ENCODE measurements at regions of chr12 and their contacts with region 1.

Region 1: GRCh38 chr12:41277116-41277945 is 89.2 kb downstream of the PDZRN4 start:
- DNase-seq: peak in 1 of 5 donors; percentile 10
- ATAC-seq: no peak
- H3K4me3 ChIP-seq: no peak overlapping the region
- H3K27ac ChIP-seq: no peak overlapping the region
- H3K4me1 ChIP-seq: peaks cover 0 to 14% (median 0%) of the 10 kb centered on the region in 12 donors
- H3K27me3 ChIP-seq: no peaks in the 10 kb centered on the region
- CTCF ChIP-seq: peak; percentile 40 to 74 (median 64)
- POLR2A ChIP-seq: no peak

Region 2: GRCh38 chr12:41663598-41664258 is 386.4 kb after region 1 on chr12:
- intact Hi-C with region 1: loop called in 7 of 10 experiments (anchors 5 to 10 kb)
- DNase-seq: no peak
- ATAC-seq: no peak
- H3K4me3 ChIP-seq: no peak overlapping the region
- H3K27ac ChIP-seq: no peak overlapping the region
- H3K4me1 ChIP-seq: peaks cover 0 to 7% (median 0%) of the 10 kb centered on the region in 12 donors
- H3K27me3 ChIP-seq: no peaks in the 10 kb centered on the region
- CTCF ChIP-seq: peak in 10 of 12 donors; percentile 16 to 54 (median 36)
- POLR2A ChIP-seq: no peak

Region 3: DNA sequence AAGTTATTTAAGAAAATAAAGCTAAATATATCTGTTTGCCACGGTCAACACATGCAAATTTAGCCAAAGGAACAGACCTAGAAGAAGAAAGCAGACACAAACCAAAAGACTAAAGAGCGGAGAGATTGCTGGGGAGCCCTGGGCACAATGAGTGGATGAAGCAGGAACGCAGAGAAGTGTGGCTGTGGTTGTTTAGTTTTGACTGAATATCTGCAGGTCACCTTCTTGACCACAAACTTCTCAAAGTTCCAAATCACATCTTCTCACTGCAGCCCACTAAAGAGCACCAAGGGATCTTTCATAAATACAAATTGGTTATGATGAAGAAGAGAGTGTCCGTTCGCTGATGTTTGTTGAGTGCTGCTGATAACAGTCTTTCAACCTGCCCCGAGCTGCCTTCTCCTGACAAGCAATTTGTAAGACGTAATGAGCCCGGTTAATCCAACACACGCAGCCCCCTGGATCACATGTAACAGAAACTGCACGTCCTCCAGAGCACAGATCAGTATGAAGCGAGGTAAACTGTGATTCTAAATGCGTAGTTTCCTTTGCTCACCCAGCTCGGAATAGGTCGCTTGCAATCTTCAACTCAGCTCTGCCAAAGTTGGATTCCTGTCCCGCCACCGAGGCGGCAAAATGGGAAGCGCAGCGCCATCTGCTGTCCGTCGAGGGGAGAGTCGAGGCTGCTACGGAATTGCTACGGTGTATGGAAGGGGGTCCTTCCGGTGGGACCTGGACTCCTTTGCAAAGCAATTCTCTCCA is 746.6 kb after region 1 on chr12:
- intact Hi-C with region 1: loop called (anchors 1 to 5 kb)
- DNase-seq: peak; percentile 71 to 88 (median 74)
- ATAC-seq: peak; percentile 57 to 93 (median 91)
- H3K4me3 ChIP-seq: peak overlapping the region in 10 of 12 donors; percentile 17 to 57 (median 44)
- H3K27ac ChIP-seq: no peak overlapping the region
- H3K4me1 ChIP-seq: peaks cover 0 to 14% (median 0%) of the 10 kb centered on the region in 12 donors
- H3K27me3 ChIP-seq: no peaks in the 10 kb centered on the region
- CTCF ChIP-seq: peak; percentile 90 to 98 (median 96)
- POLR2A ChIP-seq: no peak

Region 4: GRCh38 chr12:42104087-42104486 is 826.8 kb after region 1 on chr12:
- intact Hi-C with region 1: loop called in 2 of 10 experiments (anchors 10 kb)
- DNase-seq: no peak
- ATAC-seq: no peak
- H3K4me3 ChIP-seq: no peak overlapping the region
- H3K27ac ChIP-seq: no peak overlapping the region
- H3K4me1 ChIP-seq: no peaks in the 10 kb centered on the region
- H3K27me3 ChIP-seq: no peaks in the 10 kb centered on the region
- CTCF ChIP-seq: peak in 5 of 12 donors; percentile 10 to 40 (median 31)
- POLR2A ChIP-seq: no peak

Region 5: GRCh38 chr12:42332301-42333285 is 1055.3 kb after region 1 on chr12:
- intact Hi-C with region 1: loop called in 1 of 10 experiments (anchors 10 kb)
- DNase-seq: no peak
- ATAC-seq: peak in 3 of 4 donors; percentile 39 to 67 (median 44)
- H3K4me3 ChIP-seq: no peak overlapping the region
- H3K27ac ChIP-seq: no peak overlapping the region
- H3K4me1 ChIP-seq: peaks cover 0 to 28% (median 9%) of the 10 kb centered on the region in 12 donors
- H3K27me3 ChIP-seq: no peaks in the 10 kb centered on the region
- CTCF ChIP-seq: peak; percentile 56 to 81 (median 66)
- POLR2A ChIP-seq: no peak

Region 6: DNA sequence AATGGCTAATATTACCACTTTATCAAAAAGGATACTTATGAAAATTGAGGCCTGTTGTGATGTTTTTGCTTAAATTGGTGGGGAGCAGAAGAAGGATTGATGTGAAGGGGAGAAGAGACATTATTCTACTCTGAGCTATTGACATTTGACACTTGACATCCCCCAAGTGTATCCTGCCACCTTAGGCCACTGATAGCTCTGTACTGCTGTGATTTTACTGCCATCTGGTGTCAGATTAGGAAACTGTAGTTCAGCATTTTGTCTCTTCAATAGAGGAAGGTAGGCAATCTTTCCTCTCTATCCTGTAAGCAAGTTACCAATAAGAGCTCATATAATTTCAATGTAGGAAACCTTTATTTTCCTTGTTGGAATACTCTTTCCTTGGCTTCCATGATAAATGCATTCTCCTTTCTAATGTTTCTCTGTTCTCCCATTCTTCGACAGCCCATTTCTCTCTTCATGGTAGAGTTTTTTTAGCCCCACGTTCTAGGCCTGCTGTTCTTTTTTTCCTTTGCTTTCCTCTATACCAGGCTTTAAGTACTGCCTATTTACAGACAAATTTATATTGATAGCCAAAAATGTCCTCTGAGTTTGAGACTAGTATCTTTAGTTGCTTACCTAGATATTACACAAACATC is 1094.9 kb after region 1 on chr12:
- intact Hi-C with region 1: loop called in 1 of 10 experiments (anchors 10 kb)
- DNase-seq: peak in 1 of 5 donors; percentile 15
- ATAC-seq: peak in 3 of 4 donors; percentile 67 to 78 (median 71)
- H3K4me3 ChIP-seq: no peak overlapping the region
- H3K27ac ChIP-seq: no peak overlapping the region
- H3K4me1 ChIP-seq: no peaks in the 10 kb centered on the region
- H3K27me3 ChIP-seq: no peaks in the 10 kb centered on the region
- CTCF ChIP-seq: peak; percentile 60 to 81 (median 70)
- POLR2A ChIP-seq: no peak

Region 7: GRCh38 chr12:42568952-42569915 is 1291.9 kb after region 1 on chr12:
- intact Hi-C with region 1: loop called in 1 of 10 experiments (anchors 10 kb)
- DNase-seq: no peak
- ATAC-seq: peak in 3 of 4 donors; percentile 40 to 75 (median 66)
- H3K4me3 ChIP-seq: no peak overlapping the region
- H3K27ac ChIP-seq: no peak overlapping the region
- H3K4me1 ChIP-seq: peaks cover 0 to 41% (median 22%) of the 10 kb centered on the region in 12 donors
- H3K27me3 ChIP-seq: no peaks in the 10 kb centered on the region
- CTCF ChIP-seq: peak; percentile 48 to 80 (median 68)
- POLR2A ChIP-seq: no peak

Measured in heart left ventricle (tissue), 16 donors.